Activated B cell treated with CpG ODN at 0.5 μM for 24 hours (primary cell): ENCODE measurements at regions of chr17 and their contacts with region 1.

Region 1: DNA sequence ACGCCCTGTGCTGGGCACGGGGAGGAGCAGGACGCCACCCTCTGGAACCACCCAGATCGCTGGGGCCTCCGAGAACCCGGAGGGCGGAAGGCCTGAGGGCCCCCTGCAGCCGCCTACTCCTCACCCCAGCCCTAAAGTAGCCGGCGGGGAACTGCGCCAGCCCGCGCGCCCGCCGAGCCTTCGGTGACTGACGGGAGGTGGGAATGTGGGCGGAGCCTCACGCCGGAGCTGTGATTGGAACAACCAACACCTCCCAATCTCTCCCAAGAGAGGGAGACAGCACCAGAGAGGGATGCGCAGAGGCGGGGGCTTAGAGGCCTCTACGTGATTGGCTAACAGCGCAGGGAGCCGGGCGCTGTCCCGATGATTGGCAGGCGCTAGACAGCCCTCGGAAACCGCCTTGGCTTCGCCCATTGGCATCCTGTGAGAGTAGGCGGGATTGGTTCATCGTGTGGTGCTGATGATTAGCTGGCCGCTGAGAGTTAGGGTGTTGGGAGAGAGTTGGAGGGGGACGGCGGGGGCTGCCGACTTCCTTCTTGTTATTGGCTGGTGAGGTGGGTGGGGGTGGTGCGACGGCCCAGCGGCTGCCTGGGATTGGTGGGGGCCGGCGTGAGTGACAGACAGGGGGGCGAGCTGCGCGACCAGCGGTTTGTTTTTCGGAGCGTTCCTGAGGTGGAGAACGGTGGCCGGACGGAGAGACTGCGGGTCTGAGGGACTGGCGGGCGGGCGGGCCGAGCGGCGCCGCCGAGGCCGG is at the start of gene MAP3K3:
- DNase-seq: peak; percentile 85
- ATAC-seq: peak; percentile 89
- H3K4me3 Mint-ChIP-seq: peak within 1 kb of the TSS; percentile 95
- H3K27ac Mint-ChIP-seq: peak within 1 kb of the TSS; percentile 91
- H3K4me1 Mint-ChIP-seq: peaks cover 33% of the 10 kb centered on the region
- H3K27me3 Mint-ChIP-seq: no peaks in the 10 kb centered on the region
- CTCF ChIP-seq: no peak
- total RNA-seq, gene MAP3K3: 32.5 and 32.9 TPM in 2 replicates

Region 2: DNA sequence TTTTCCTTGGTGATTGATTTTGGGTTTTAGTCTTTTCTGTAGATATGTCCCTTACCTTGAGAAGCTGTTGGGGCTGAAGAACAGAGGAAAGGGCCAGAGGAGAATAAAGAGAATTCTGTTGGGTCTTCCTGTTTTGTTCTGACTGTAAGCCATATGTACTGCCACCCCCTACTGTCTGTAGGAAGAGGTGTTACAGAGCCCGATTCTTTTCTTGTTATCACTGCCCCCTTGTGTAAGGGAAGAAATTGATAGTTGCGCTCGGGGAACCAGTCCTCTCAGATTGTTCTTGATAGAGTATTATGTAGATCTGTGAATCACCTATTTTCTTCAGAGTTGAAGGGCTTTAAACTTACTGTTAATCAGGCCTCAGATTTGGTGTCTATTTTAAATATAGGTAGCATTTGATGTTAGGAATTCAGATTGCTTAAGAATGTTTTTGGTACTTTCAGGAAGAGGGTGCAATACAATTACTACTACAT is 653.5 kb before region 1 on chr17:
- CTCF ChIA-PET with region 1: no interaction called
- POLR2A ChIA-PET with region 1: interaction called, 3 read pairs
- intact Hi-C with region 1: loop called (anchors 10 kb)
- DNase-seq: no peak
- ATAC-seq: peak; percentile 57
- H3K4me3 Mint-ChIP-seq: peak overlapping the region; percentile 60
- H3K27ac Mint-ChIP-seq: no peak overlapping the region
- H3K4me1 Mint-ChIP-seq: peaks cover 25% of the 10 kb centered on the region
- H3K27me3 Mint-ChIP-seq: peaks cover 1% of the 10 kb centered on the region
- CTCF ChIP-seq: peak; percentile 63

Region 3: DNA sequence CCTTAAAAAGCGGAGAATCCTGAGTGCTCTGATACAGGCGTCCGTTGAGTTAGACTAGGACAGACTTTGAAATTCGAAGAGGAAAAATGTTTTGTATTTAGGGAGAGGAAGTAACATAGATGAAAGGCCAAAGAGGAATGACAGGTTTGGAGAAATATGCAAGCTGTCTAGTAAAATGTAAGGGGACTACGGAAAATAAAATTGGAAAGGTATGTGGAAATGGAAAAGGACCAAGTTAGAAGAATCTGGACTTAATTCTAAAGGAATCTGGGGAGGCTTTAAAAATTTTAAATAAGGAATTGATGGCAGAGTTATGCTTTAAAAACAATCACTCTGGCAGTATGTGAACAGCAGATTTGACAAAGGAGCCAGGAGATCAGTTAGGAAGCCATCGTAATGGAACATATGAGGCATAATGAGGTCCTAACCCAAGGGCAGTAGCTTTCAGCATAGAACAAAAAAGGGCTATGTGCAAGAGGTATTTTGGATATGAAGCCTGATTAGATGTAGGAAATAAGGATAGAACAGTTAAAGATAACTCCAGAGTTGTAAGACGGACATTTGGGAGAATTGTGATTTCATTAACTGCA is 214.1 kb before region 1 on chr17:
- CTCF ChIA-PET with region 1: no interaction called
- POLR2A ChIA-PET with region 1: no interaction called
- intact Hi-C with region 1: no loop called
- DNase-seq: no peak
- ATAC-seq: no peak
- H3K4me3 Mint-ChIP-seq: no peak overlapping the region
- H3K27ac Mint-ChIP-seq: no peak overlapping the region
- H3K4me1 Mint-ChIP-seq: peaks cover 2% of the 10 kb centered on the region
- H3K27me3 Mint-ChIP-seq: no peaks in the 10 kb centered on the region
- CTCF ChIP-seq: no peak

Region 4: DNA sequence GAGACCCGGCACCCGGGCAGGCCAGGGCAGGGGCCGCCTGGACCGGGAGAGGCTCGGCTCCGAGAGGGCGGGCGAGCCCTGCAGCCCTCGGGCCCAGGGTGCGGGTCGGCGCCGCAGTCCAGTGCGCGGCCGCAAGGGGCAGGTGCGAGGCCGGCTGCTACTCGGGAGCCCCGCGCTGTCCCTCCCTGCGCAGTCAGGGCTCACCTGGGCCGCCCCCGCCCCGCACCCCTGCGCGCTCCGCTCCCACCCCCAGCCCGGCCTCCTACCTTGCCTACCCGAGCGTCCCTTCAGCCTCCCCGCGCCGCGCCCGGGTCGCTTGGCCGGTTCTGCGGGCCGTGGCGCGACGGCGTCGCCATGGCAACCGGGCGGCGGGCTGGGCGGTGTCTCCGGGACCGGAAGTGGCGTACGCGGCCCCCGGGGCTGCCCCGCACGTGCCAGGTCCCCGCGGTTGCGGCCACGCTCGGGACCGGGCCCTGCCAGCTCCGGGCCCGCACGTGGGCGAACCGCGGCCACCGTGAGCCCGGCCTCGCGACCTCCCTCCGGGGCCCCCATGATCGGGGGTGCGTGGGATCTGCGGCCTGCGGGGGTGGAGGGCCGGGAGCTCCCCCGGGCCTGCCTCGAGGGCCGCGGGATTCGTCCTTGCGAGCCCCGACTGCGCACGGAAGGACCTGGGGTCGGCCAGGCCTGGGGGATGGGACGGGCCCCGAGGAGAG is 175.8 kb before region 1 on chr17 and contains the start of gene CYB561:
- CTCF ChIA-PET with region 1: no interaction called
- POLR2A ChIA-PET with region 1: interaction called, 17 read pairs
- intact Hi-C with region 1: loop called (anchors 5 kb)
- DNase-seq: peak; percentile 88
- ATAC-seq: peak; percentile 68
- H3K4me3 Mint-ChIP-seq: peak within 1 kb of the TSS; percentile 73
- H3K27ac Mint-ChIP-seq: peak within 1 kb of the TSS; percentile 78
- H3K4me1 Mint-ChIP-seq: peaks cover 17% of the 10 kb centered on the region
- H3K27me3 Mint-ChIP-seq: no peaks in the 10 kb centered on the region
- CTCF ChIP-seq: no peak
- total RNA-seq, gene CYB561: 18.9 and 19.9 TPM in 2 replicates

Region 5: GRCh38 chr17:63600569-63601438 is 21.1 kb before region 1 on chr17 and contains the start of gene TACO1:
- CTCF ChIA-PET with region 1: no interaction called
- POLR2A ChIA-PET with region 1: interaction called, 15 read pairs
- intact Hi-C with region 1: loop called (anchors 1 kb)
- DNase-seq: peak; percentile 80
- ATAC-seq: peak; percentile 99
- H3K4me3 Mint-ChIP-seq: peak within 1 kb of the TSS; percentile 89
- H3K27ac Mint-ChIP-seq: peak within 1 kb of the TSS; percentile 76
- H3K4me1 Mint-ChIP-seq: peaks cover 17% of the 10 kb centered on the region
- H3K27me3 Mint-ChIP-seq: no peaks in the 10 kb centered on the region
- CTCF ChIP-seq: no peak
- total RNA-seq, gene TACO1: 19.1 and 23.5 TPM in 2 replicates

Region 6: GRCh38 chr17:63646488-63646806 is 24.5 kb after region 1 on chr17:
- CTCF ChIA-PET with region 1: no interaction called
- POLR2A ChIA-PET with region 1: interaction called, 15 read pairs
- intact Hi-C with region 1: loop called (anchors 1 kb)
- DNase-seq: no peak
- ATAC-seq: peak; percentile 82
- H3K4me3 Mint-ChIP-seq: peak overlapping the region; percentile 3
- H3K27ac Mint-ChIP-seq: peak overlapping the region; percentile 90
- H3K4me1 Mint-ChIP-seq: peaks cover 46% of the 10 kb centered on the region
- H3K27me3 Mint-ChIP-seq: no peaks in the 10 kb centered on the region
- CTCF ChIP-seq: no peak

Region 7: GRCh38 chr17:63741221-63742049 is 119.5 kb after region 1 on chr17 and contains the start of gene STRADA:
- CTCF ChIA-PET with region 1: no interaction called
- POLR2A ChIA-PET with region 1: interaction called, 18 read pairs
- intact Hi-C with region 1: loop called (anchors 1 kb)
- DNase-seq: peak; percentile 99
- ATAC-seq: peak; percentile 86
- H3K4me3 Mint-ChIP-seq: peak within 1 kb of the TSS; percentile 86
- H3K27ac Mint-ChIP-seq: peak within 1 kb of the TSS; percentile 96
- H3K4me1 Mint-ChIP-seq: peaks cover 28% of the 10 kb centered on the region
- H3K27me3 Mint-ChIP-seq: no peaks in the 10 kb centered on the region
- CTCF ChIP-seq: no peak
- total RNA-seq, gene STRADA: 72.5 and 80.2 TPM in 2 replicates

Region 8: DNA sequence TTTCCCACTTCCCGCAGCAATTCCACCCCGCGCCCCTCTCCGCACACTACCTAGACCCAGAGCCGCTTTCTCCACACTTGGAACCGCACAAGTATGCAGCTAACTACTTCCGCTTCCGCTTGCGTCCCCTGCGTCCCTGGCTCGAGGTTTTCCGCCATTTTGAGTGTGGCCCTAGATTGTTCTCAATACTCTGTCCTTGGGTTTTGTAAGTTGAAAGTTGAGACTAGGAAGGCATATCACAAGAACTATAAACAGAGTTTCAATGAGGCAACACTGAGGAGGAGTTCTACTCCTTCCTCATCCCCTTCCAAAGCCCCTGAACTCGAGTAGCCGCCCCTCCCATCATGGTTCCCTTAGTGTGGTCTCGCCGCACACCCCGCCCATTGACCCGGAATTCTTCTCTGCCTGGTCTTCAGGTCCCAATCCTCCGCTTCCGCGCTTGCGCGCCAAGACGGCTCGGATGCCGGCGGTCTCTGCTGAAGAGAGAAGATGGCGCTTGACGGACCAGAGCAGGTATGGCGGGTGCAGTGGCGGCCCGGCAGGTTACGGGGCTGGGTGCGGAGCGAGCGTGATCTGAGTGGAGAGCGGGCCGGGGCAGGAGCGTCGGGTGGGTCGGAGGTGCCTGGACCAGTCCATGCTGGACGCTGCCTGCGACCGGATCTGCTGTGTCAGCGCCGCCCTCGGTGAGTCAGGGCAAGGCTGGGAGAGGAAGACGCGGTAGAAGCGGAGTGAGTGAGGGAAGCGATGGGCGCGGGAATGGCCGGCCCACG is 205.2 kb after region 1 on chr17 and contains the starts of genes FTSJ3 and PSMC5:
- CTCF ChIA-PET with region 1: no interaction called
- POLR2A ChIA-PET with region 1: no interaction called
- intact Hi-C with region 1: loop called (anchors 1 kb)
- DNase-seq: peak; percentile 90
- ATAC-seq: peak; percentile 95
- H3K4me3 Mint-ChIP-seq: peak within 1 kb of the TSS; percentile 98
- H3K27ac Mint-ChIP-seq: peak within 1 kb of the TSS; percentile 100
- H3K4me1 Mint-ChIP-seq: peaks cover 75% of the 10 kb centered on the region
- H3K27me3 Mint-ChIP-seq: no peaks in the 10 kb centered on the region
- CTCF ChIP-seq: no peak
- total RNA-seq, gene FTSJ3: 82.0 and 85.1 TPM in 2 replicates
- total RNA-seq, gene PSMC5: 157 TPM in 2 replicates